ENCODE measurements at regions of chr10 and their contacts with region 1.

Region 1: DNA sequence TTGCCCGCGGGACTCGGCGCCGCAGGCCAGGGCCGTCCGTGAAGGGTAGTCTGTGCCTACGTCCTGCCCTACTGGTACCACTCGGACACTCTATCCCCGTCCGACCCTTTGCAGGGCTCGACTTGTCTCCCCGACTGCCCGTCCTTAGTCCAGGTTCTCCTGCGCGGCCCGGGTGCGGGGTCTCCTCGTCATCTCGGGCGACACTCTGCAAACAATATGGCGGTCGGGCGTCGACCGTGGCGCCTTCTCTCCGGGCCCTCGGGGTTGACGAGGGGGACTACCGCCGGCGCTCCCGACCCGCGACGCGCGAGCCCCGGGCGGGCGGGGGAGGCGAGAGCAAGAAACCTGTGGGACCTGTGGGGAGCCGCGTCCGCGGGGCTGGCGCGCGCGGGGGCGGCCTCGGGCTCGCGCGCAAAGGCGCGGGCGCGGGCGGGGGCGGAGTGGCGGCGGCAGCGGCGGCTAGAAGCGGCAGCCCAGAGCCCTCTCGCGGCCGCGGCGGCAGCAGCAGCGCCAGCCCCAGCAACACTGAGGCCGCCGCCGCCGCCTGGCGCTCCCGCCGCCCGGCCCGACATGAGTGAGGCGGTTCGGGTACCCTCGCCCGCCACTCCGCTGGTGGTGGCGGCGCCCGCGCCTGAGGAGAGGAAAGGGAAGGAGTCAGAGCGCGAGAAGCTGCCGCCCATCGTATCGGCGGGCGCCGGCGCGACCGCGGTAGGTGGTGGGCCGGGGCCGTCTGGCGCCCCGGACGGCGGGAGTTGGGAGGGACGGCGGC is at the start of gene HECTD2:
- DNase-seq: no peak
- H3K4me3 ChIP-seq: peak within 1 kb of the TSS; percentile 79
- CTCF ChIP-seq: peak; percentile 38

Region 2: GRCh38 chr10:91220194-91220953 is 189.7 kb before region 1 on chr10 and contains the start of gene PCGF5:
- CTCF ChIA-PET with region 1: no interaction called
- POLR2A ChIA-PET with region 1: no interaction called
- DNase-seq: peak; percentile 3
- H3K4me3 ChIP-seq: peak within 1 kb of the TSS; percentile 81
- CTCF ChIP-seq: peak; percentile 47

Region 3: DNA sequence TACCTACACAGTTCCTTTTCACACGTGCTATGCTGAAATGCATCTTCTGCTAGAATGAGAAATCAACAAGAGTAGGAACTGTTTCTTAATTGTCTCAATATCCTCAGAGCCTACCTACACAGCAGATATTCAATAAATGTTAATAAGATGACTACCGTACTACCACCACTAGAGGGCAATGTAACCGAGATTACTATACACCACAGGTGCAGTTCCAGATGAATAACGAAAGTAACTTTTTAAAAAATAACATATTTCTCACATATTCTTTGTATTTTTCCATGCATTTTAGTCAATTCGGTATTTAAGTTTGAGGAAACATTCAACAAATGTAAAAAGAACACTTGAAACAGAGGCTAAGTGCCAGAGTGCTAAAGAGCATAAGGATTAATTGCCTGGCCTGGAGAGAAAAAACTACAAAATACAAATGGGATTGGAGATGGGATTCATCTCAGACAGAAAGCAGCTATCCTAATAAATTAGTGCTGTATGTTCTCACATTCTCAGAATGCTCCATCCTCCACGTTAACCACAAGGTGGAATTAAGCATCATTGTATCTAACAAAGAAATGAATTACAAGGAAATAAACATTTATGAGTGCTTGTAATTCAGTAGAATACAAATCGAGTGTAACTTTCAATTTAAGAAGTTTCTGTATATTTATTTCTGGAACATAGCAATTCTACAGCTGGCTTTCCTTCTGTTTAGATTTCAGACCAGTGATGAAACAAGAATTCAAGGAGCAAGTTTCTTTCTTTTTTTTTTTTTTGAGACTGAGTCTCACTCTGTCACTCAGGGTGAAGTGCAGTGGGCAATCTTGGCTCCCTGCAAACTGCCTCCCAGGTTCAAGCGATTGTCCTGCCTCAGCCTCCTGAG is 20.2 kb before region 1 on chr10:
- CTCF ChIA-PET with region 1: interaction called, 30 read pairs
- POLR2A ChIA-PET with region 1: no interaction called
- DNase-seq: no peak
- H3K4me3 ChIP-seq: no peak overlapping the region
- CTCF ChIP-seq: peak; percentile 30

Region 4: DNA sequence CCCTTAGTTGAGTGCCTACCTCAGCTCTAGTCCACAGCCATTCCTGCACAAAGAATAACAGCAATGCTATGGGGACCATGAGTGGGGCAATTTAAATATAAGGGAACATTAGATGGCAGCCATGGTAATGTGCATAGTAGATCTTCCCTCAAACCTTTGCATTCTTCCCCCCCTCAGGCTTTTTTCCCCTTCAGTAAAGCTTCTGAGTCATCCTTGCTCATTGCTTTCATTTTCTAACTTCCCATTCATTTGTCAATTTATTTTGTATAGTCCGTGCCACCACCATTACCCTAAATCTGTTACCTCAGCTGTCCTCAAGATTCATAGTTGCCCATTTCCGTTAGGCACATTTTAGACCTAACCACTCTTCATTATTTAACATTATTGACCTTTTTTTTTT is 10.8 kb after region 1 on chr10:
- CTCF ChIA-PET with region 1: interaction called, 16 read pairs
- POLR2A ChIA-PET with region 1: interaction called, 3 read pairs
- DNase-seq: no peak
- H3K4me3 ChIP-seq: no peak overlapping the region
- CTCF ChIP-seq: no peak

Measured in AG04449 (cell line).